CD8-positive, alpha-beta T cell (primary cell): ENCODE measurements at regions of chr19 and their contacts with region 1.

Region 1: DNA sequence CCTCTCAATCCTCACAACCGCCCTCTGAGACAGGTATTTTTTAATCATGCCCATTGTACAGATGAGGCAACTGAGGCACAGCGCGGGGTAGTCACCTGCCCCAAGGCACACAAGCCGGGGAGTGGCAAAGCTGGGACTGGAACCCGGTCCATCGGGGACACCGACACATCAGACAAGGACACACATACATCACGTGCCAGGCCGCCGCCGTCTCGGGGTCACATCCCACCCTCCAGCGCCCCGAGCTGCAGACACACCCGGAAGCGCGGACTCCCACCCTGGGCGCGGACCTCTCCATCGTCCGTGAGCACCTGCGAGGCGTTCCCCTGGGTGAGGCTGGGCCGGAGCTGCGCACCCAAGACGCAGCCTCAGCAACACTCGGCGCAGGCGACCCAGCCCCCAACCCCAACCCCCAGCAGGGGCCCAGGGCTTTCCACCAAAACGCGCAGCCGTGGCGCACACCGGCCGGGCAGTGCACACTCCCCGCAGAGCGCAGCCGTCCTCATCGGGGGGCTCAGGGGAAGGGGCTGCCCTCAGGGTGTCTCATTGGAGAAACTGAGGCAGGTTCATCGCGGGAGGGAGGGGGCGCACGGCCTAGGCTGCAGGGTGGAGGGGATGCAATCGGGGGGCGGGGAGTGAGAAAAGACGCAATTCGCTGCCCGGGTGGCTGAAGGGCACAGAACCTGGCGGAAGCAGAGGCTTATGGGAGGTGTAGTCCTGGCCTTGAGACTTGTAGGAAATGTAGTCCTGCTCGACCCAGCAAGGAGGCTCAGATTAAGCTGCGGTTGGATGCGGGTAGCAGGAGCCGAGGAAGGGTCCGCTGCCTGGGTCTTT is 1.9 kb upstream of the LMTK3 start:
- DNase-seq: peak in 8 of 9 experiments; percentile 61 to 88 (median 78)
- ATAC-seq: peak; percentile 58
- H3K4me3 ChIP-seq: peak overlapping the region; percentile 78 to 88
- H3K4me3 Mint-ChIP-seq: no peak overlapping the region
- H3K27ac ChIP-seq: peak overlapping the region; percentile 68 to 71
- H3K27ac Mint-ChIP-seq: peak overlapping the region; percentile 93
- H3K4me1 ChIP-seq: peaks cover 23% of the 10 kb centered on the region
- H3K4me1 Mint-ChIP-seq: peaks cover 18% of the 10 kb centered on the region
- H3K27me3 ChIP-seq: no peaks in the 10 kb centered on the region
- H3K27me3 Mint-ChIP-seq: no peaks in the 10 kb centered on the region
- CTCF ChIP-seq: no peak

Region 2: DNA sequence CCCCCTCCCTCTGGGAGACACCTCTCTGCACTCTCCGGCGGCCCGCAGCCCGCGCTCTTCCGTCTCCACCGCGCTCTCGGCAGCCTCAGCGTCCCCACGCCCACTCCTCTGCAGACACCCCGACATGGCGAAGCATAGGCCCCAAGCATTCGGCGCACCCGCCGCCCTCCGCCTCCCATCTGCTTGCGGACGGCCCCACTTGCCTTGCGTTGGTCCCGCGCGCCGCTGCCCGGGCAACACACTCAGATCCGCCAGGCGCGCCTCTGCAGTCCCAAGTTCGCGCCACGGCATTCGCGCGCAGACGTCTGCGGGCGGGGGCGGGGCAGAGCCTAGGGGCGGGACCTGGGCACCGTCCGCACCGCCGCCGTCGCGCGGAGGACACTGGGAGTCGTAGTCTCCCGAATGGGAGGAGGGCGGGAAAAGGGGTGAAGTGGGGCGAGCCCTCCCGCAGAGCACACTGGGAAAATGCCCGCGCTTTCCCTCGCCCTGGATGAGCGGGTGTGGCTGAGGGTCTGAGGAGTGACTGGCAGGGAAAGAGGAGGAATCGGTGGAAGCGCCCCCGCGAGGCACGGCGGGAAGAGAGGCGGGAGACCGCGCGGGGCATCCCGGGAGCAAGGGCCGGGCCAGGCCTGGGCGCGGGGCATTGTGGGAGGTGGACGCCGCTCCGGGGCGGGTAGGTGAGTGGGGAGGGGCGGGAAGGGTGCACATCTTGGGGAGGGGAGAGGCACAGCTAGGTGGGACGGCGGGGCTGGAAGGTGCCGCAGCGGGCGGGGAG is 343.3 kb before region 1 on chr19 and contains the starts of genes LIG1 and ZSWIM9:
- CTCF ChIA-PET with region 1: no interaction called
- POLR2A ChIA-PET with region 1: no interaction called
- intact Hi-C with region 1: loop called (anchors 2 to 5 kb)
- DNase-seq: peak; percentile 82 to 95 (median 90)
- ATAC-seq: peak; percentile 81
- H3K4me3 ChIP-seq: peak within 1 kb of the TSS; percentile 96 to 100
- H3K4me3 Mint-ChIP-seq: peak within 1 kb of the TSS; percentile 98
- H3K27ac ChIP-seq: peak within 1 kb of the TSS; percentile 82 to 92
- H3K27ac Mint-ChIP-seq: peak within 1 kb of the TSS; percentile 97
- H3K4me1 ChIP-seq: peaks cover 7% of the 10 kb centered on the region
- H3K4me1 Mint-ChIP-seq: peaks cover 22% of the 10 kb centered on the region
- H3K27me3 ChIP-seq: no peaks in the 10 kb centered on the region
- H3K27me3 Mint-ChIP-seq: no peaks in the 10 kb centered on the region
- CTCF ChIP-seq: peak; percentile 25
- total RNA-seq, gene LIG1: 62.5 to 67.5 TPM
- total RNA-seq, gene ZSWIM9: 2.5 to 4.5 TPM

Region 3: GRCh38 chr19:48333467-48334384 is 179.8 kb before region 1 on chr19:
- CTCF ChIA-PET with region 1: no interaction called
- POLR2A ChIA-PET with region 1: no interaction called
- intact Hi-C with region 1: loop called in 1 of 2 experiments (anchors 5 kb)
- DNase-seq: peak; percentile 88 to 97 (median 93)
- ATAC-seq: peak; percentile 55
- H3K4me3 ChIP-seq: peak overlapping the region; percentile 73 to 78
- H3K4me3 Mint-ChIP-seq: peak overlapping the region; percentile 94
- H3K27ac ChIP-seq: peak overlapping the region; percentile 65 to 98
- H3K27ac Mint-ChIP-seq: peak overlapping the region; percentile 96
- H3K4me1 ChIP-seq: peaks cover 41% of the 10 kb centered on the region
- H3K4me1 Mint-ChIP-seq: peaks cover 51% of the 10 kb centered on the region
- H3K27me3 ChIP-seq: no peaks in the 10 kb centered on the region
- H3K27me3 Mint-ChIP-seq: no peaks in the 10 kb centered on the region
- CTCF ChIP-seq: peak; percentile 79

Region 4: GRCh38 chr19:48445606-48446481 is 67.7 kb before region 1 on chr19 and contains the start of gene GRWD1:
- CTCF ChIA-PET with region 1: no interaction called
- POLR2A ChIA-PET with region 1: no interaction called
- intact Hi-C with region 1: loop called (anchors 2 kb)
- DNase-seq: peak; percentile 83 to 98 (median 91)
- ATAC-seq: peak; percentile 93
- H3K4me3 ChIP-seq: peak within 1 kb of the TSS; percentile 82 to 90
- H3K4me3 Mint-ChIP-seq: peak within 1 kb of the TSS; percentile 93
- H3K27ac ChIP-seq: peak within 1 kb of the TSS; percentile 79 to 89
- H3K27ac Mint-ChIP-seq: peak within 1 kb of the TSS; percentile 95
- H3K4me1 ChIP-seq: peaks cover 24% of the 10 kb centered on the region
- H3K4me1 Mint-ChIP-seq: peaks cover 40% of the 10 kb centered on the region
- H3K27me3 ChIP-seq: peaks cover 19 to 22% of the 10 kb centered on the region in 2 experiments
- H3K27me3 Mint-ChIP-seq: peaks cover 18% of the 10 kb centered on the region
- CTCF ChIP-seq: no peak
- total RNA-seq, gene GRWD1: 36.1 to 41.7 TPM

Region 5: GRCh38 chr19:48501496-48502350 is 11.8 kb before region 1 on chr19:
- CTCF ChIA-PET with region 1: interaction called, 4 read pairs
- POLR2A ChIA-PET with region 1: no interaction called
- intact Hi-C with region 1: loop called in 1 of 2 experiments (anchors 1 kb)
- DNase-seq: peak in 8 of 9 experiments; percentile 47 to 82 (median 52)
- ATAC-seq: peak; percentile 74
- H3K4me3 ChIP-seq: peak overlapping the region; percentile 14 to 21
- H3K4me3 Mint-ChIP-seq: peak overlapping the region; percentile 74
- H3K27ac ChIP-seq: no peak overlapping the region
- H3K27ac Mint-ChIP-seq: no peak overlapping the region
- H3K4me1 ChIP-seq: peaks cover 11% of the 10 kb centered on the region
- H3K4me1 Mint-ChIP-seq: peaks cover 16% of the 10 kb centered on the region
- H3K27me3 ChIP-seq: peaks cover 0 to 11% of the 10 kb centered on the region in 2 experiments
- H3K27me3 Mint-ChIP-seq: no peaks in the 10 kb centered on the region
- CTCF ChIP-seq: no peak

Region 6: GRCh38 chr19:48720613-48721296 is 207.2 kb after region 1 on chr19:
- CTCF ChIA-PET with region 1: no interaction called
- POLR2A ChIA-PET with region 1: no interaction called
- intact Hi-C with region 1: loop called (anchors 2 to 5 kb)
- DNase-seq: peak; percentile 81 to 96 (median 90)
- ATAC-seq: peak; percentile 80
- H3K4me3 ChIP-seq: peak overlapping the region; percentile 65 to 69
- H3K4me3 Mint-ChIP-seq: peak overlapping the region; percentile 96
- H3K27ac ChIP-seq: peak overlapping the region; percentile 52 to 88
- H3K27ac Mint-ChIP-seq: peak overlapping the region; percentile 96
- H3K4me1 ChIP-seq: peaks cover 16% of the 10 kb centered on the region
- H3K4me1 Mint-ChIP-seq: peaks cover 24% of the 10 kb centered on the region
- H3K27me3 ChIP-seq: no peaks in the 10 kb centered on the region
- H3K27me3 Mint-ChIP-seq: no peaks in the 10 kb centered on the region
- CTCF ChIP-seq: no peak

Region 7: GRCh38 chr19:48965040-48965805 is 451.7 kb after region 1 on chr19 and contains the start of gene FTL:
- CTCF ChIA-PET with region 1: no interaction called
- POLR2A ChIA-PET with region 1: no interaction called
- intact Hi-C with region 1: loop called in 1 of 2 experiments (anchors 5 kb)
- DNase-seq: peak; percentile 71 to 96 (median 88)
- ATAC-seq: peak; percentile 73
- H3K4me3 ChIP-seq: peak within 1 kb of the TSS; percentile 83 to 98
- H3K4me3 Mint-ChIP-seq: peak within 1 kb of the TSS; percentile 99
- H3K27ac ChIP-seq: peak within 1 kb of the TSS; percentile 84 to 90
- H3K27ac Mint-ChIP-seq: peak within 1 kb of the TSS; percentile 99
- H3K4me1 ChIP-seq: peaks cover 49% of the 10 kb centered on the region
- H3K4me1 Mint-ChIP-seq: peaks cover 60% of the 10 kb centered on the region
- H3K27me3 ChIP-seq: no peaks in the 10 kb centered on the region
- H3K27me3 Mint-ChIP-seq: no peaks in the 10 kb centered on the region
- CTCF ChIP-seq: no peak
- total RNA-seq, gene FTL: 665 to 668 TPM